ENCODE measurements at regions of chr3 and their contacts with region 1.

Region 1: DNA sequence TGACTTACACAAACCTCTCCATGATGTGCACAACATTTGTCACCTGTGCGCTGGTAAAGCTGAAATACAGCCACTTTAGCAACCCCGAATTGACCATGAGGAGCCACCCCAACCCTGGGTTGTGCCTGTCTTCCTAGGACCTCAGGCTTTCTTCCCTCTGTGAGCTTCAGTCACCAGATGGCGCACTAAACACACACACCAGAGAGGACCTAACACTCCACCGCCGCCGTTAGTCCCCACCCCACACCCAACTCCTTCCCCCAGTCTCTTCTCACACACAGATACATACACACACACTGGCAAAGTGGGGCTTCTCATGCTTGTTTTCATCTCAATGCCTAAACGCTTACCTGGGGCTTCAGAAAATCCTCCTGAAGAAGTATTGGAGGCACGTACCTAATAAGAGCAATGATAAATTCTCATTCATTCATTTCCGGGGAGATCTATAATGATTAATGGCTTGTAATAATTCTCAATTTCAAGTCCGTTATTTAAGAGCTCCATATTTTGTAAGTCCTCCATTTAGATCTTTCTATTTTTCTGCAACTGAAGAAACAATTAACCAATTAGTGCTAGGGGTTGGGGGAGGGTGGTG is 2.1 kb upstream of the CCDC80 start:
- DNase-seq: peak; percentile 68
- ATAC-seq: peak; percentile 97
- H3K4me3 ChIP-seq: no peak overlapping the region
- H3K27ac ChIP-seq: no peak overlapping the region
- H3K4me1 ChIP-seq: peaks cover 11% of the 10 kb centered on the region; the same call in 1 of the 2 replicates
- H3K27me3 ChIP-seq: peaks cover 3 to 23% of the 10 kb centered on the region in 2 experiments; a peak in 4 of 5 replicates
- CTCF ChIP-seq: peak; percentile 89
- EP300 ChIP-seq: no peak
- POLR2A ChIP-seq: no peak
- RAD21 ChIP-seq: peak; percentile 63

Region 2: DNA sequence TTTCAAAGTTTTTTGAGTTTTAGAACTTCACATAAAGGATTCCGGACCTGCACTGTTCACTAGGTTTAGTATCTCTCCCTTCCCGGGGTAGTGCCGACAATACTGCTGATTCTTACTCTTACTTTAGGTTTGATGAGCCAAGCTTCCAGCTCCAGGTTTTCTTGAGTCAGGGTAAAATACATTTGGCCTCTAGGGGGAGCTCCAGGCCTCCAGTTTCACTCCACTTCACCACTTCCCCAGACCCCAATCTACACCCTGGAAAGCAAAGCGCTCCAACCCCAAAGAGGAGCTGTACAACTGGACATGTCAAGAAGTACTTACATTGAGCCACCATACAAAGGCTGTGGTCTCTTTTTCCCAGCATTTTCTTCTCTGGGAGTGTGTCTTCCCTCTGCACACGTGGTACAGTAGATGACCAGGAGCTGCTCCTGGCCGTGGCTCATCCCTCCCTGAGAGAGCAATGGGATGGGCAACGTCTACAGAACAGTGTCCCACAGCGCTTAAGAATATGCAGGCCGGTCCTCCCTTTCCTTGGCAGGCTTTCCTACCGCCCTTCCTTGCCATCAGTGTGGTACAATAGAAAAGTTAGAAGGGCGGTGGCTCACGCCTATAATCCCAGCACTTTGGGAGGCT is 91.8 kb after region 1 on chr3:
- CTCF ChIA-PET with region 1: no interaction called
- POLR2A ChIA-PET with region 1: no interaction called
- in situ Hi-C with region 1: no loop called
- intact Hi-C with region 1: loop called (anchors 2 kb)
- DNase-seq: peak; percentile 49
- ATAC-seq: peak; percentile 96
- H3K4me3 ChIP-seq: no peak overlapping the region
- H3K27ac ChIP-seq: no peak overlapping the region
- H3K4me1 ChIP-seq: no peaks in the 10 kb centered on the region
- H3K27me3 ChIP-seq: peaks cover 0 to 3% of the 10 kb centered on the region in 2 experiments; a peak in 1 of 5 replicates
- CTCF ChIP-seq: peak; percentile 73
- EP300 ChIP-seq: no peak
- POLR2A ChIP-seq: no peak
- RAD21 ChIP-seq: 0 out of 2 replicates have a peak, but pooled peaks have one; percentile 17

Region 3: GRCh38 chr3:112814266-112814665 is 171.3 kb after region 1 on chr3:
- CTCF ChIA-PET with region 1: interaction called, 3 read pairs
- POLR2A ChIA-PET with region 1: no interaction called
- in situ Hi-C with region 1: loop called (anchors 10 kb)
- intact Hi-C with region 1: loop called (anchors 1 kb)
- DNase-seq: peak; percentile 2
- ATAC-seq: no peak
- H3K4me3 ChIP-seq: no peak overlapping the region
- H3K27ac ChIP-seq: no peak overlapping the region
- H3K4me1 ChIP-seq: no peaks in the 10 kb centered on the region
- H3K27me3 ChIP-seq: no peaks in the 10 kb centered on the region
- CTCF ChIP-seq: 0 out of 2 replicates have a peak, but pooled peaks have one; percentile 10
- EP300 ChIP-seq: no peak
- POLR2A ChIP-seq: no peak
- RAD21 ChIP-seq: no peak

Region 4: DNA sequence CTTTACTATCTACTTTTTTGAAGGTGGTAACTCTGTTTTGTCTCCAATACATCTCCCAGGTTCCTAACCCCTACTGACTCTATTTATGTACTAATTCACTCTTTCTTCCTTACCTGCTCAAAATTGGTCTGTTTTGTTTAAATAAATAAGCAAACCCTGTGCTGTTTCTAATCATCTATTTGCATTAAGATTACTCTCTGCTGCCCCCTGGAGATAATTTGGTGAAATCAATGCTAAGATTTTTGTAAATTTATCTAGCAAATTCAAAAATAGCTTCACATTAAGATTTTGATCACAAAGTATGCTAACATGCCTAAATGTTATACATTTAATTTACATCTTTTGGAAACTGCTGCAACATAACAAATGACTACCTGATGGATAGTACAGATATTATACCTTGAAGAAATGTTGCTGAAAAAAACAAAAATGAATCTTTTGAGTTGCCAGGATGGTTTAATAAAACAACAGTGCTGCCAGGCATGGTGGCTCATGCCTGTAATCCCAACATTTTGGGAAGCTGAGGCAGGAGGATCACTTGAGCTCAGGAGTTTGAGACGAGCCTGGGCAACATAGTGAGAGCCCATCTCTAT is 336.3 kb after region 1 on chr3:
- CTCF ChIA-PET with region 1: interaction called, 17 read pairs
- POLR2A ChIA-PET with region 1: no interaction called
- in situ Hi-C with region 1: loop called (anchors 5 kb)
- intact Hi-C with region 1: loop called (anchors 1 kb)
- DNase-seq: peak; percentile 14
- ATAC-seq: no peak
- H3K4me3 ChIP-seq: no peak overlapping the region
- H3K27ac ChIP-seq: no peak overlapping the region
- H3K4me1 ChIP-seq: peaks cover 11% of the 10 kb centered on the region; the same call in 1 of the 2 replicates
- H3K27me3 ChIP-seq: peaks cover 0 to 5% of the 10 kb centered on the region in 2 experiments; a peak in 1 of 5 replicates
- CTCF ChIP-seq: peak; percentile 41
- EP300 ChIP-seq: no peak
- POLR2A ChIP-seq: no peak
- RAD21 ChIP-seq: no peak

Region 5: GRCh38 chr3:113275929-113276750 is 633.1 kb after region 1 on chr3:
- CTCF ChIA-PET with region 1: no interaction called
- POLR2A ChIA-PET with region 1: no interaction called
- in situ Hi-C with region 1: no loop called
- intact Hi-C with region 1: no loop called
- DNase-seq: peak; percentile 76
- ATAC-seq: peak; percentile 88
- H3K4me3 ChIP-seq: peak overlapping the region; percentile 28 to 53 (median 50); a peak in 5 of 6 replicates
- H3K27ac ChIP-seq: no peak overlapping the region
- H3K4me1 ChIP-seq: peaks cover 25% of the 10 kb centered on the region
- H3K27me3 ChIP-seq: peaks cover 6 to 38% of the 10 kb centered on the region in 2 experiments; a peak in 4 of 5 replicates
- CTCF ChIP-seq: peak; percentile 57
- EP300 ChIP-seq: no peak
- POLR2A ChIP-seq: no peak
- RAD21 ChIP-seq: no peak

Measured in HepG2 (cell line).